H1 (cell line): ENCODE measurements at regions of chr14 and their contacts with region 1.

Region 1: DNA sequence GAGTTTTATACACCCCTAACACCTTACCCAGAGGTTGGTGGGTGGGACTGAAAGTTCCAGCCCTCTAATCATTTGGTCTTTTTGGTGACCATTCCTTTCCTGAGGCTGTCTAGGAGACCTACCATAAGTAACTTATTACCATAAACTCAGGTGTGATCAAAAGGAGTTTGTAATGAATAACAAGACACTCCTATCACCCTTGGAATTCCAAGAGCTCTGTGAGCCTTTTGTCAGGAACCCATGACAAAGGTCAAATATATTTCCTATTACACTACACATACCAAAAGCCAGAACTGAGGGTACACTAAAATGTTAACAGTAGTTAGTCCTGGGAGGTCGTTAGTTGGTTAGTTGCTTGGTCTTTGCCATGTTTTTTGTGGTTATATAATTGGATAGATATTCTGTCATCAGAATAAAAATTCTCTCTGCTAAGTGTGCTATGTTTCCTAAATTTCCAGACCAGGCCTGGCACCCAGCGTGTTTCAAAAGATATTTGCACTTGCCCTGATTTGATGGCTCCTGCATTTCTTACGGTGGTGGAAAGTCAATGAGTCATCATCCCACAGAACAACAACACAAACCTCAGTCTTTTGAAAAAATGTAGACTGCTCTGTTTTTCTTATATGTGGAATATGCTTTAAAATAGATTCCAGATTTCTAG is 27.0 kb upstream of the AKAP5 start:
- DNase-seq: no peak
- H3K4me3 ChIP-seq: no peak overlapping the region
- H3K27ac ChIP-seq: no peak overlapping the region
- H3K4me1 ChIP-seq: no peaks in the 10 kb centered on the region
- H3K27me3 ChIP-seq: no peaks in the 10 kb centered on the region
- CTCF ChIP-seq: no peak
- EP300 ChIP-seq: no peak
- POLR2A ChIP-seq: no peak
- RAD21 ChIP-seq: no peak

Region 2: GRCh38 chr14:64421166-64421565 is 17.1 kb before region 1 on chr14:
- CTCF ChIA-PET with region 1: interaction called, 74 read pairs
- POLR2A ChIA-PET with region 1: interaction called, 7 read pairs
- DNase-seq: no peak
- H3K4me3 ChIP-seq: no peak overlapping the region
- H3K27ac ChIP-seq: no peak overlapping the region
- H3K4me1 ChIP-seq: no peaks in the 10 kb centered on the region
- H3K27me3 ChIP-seq: no peaks in the 10 kb centered on the region
- CTCF ChIP-seq: no peak
- EP300 ChIP-seq: no peak
- POLR2A ChIP-seq: no peak
- RAD21 ChIP-seq: no peak

Region 3: DNA sequence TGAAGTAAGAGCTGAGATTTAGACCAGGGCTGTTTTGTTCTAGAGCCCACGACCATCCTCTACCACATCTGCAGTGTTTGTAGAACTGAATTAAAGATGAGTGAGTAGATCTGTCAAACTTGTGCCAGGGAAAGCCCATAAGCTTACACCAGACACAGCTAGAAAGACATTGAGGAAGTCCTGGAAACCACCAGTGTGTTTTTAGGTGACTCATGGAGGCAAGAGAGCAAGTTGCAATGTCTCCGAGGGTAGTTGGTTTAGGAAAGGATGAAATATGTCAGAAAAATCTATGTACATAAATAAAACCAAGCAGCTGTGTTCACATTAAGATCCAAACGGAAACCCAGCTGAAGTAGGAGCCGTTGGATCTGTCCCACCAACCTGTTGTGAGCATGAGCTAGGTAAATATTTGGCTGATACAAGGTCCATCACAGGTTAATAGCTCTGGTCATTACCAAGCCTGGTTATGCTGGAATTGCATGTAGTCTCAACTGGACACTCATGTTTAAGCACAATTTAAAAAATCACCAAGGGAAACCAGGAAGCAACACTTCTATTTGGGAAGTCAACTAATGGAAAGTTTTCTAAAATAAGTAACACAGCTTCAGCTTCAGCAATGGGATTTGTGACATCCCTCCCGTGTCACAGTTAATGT is 216.1 kb after region 1 on chr14:
- CTCF ChIA-PET with region 1: no interaction called
- POLR2A ChIA-PET with region 1: no interaction called
- DNase-seq: no peak
- H3K4me3 ChIP-seq: no peak overlapping the region
- H3K27ac ChIP-seq: no peak overlapping the region
- H3K4me1 ChIP-seq: peaks cover 0 to 4% (median under 1%) of the 10 kb centered on the region in 4 experiments; a peak in 3 of 7 replicates
- H3K27me3 ChIP-seq: no peaks in the 10 kb centered on the region; a peak in 1 of 7 replicates
- CTCF ChIP-seq: no peak
- EP300 ChIP-seq: no peak
- POLR2A ChIP-seq: no peak
- RAD21 ChIP-seq: no peak